Activated naive CD4-positive, alpha-beta T cell treated with anti-CD3 and anti-CD28 coated beads for 36 hours (primary cell): ENCODE measurements at regions of chr20 and their contacts with region 1.

Region 1: DNA sequence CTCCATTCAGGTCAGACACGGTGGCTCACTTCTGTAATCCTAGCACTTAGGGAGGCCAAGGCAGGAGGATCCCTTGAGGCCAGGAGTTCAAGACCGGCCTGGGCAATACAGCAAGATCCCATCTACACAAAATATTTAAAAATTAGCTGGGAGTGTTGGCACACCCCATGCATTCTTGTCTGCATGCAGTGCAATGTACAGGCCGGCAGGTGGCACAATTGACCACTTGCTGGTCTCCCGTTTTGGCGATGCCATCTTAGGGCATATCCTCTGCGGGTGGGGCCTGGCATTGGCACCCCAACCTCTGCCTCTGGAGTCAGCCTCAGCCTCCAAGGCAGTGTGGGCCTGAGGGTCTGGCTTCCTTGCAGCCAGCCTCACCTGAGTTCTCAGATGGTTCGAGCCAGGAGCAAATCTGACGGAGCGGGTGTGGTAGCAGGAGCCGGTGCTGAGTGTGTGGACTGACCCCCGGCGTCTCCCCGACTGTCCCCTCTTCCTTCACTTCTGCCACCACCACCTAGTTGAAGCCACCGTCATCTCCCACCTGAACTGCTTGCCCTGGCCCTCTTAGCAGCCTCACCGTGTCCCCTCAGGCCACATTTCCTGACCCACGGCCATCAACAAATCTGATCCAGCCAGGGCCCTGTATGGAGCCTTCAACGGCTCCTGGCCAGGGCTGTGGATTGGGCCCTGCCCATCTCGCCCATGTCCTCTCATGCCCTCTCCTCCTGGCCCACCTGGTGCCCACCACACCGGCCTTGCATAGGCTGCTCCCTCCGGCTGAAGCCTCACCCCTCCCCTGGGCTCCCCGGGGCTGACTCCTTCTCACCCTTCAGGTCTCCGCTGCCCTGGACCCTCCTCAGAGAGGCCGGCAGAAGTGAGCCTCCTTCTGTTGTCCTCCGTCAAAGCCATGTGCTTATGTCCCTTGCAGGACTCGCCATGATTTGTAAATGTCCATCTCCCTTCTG is 44.0 kb downstream of the EFCAB8 start:
- DNase-seq: peak; percentile 85
- H3K4me3 Mint-ChIP-seq: no peak overlapping the region
- H3K27ac Mint-ChIP-seq: peak overlapping the region; percentile 24
- H3K4me1 Mint-ChIP-seq: peaks cover 29% of the 10 kb centered on the region
- H3K27me3 Mint-ChIP-seq: no peaks in the 10 kb centered on the region

Region 2: DNA sequence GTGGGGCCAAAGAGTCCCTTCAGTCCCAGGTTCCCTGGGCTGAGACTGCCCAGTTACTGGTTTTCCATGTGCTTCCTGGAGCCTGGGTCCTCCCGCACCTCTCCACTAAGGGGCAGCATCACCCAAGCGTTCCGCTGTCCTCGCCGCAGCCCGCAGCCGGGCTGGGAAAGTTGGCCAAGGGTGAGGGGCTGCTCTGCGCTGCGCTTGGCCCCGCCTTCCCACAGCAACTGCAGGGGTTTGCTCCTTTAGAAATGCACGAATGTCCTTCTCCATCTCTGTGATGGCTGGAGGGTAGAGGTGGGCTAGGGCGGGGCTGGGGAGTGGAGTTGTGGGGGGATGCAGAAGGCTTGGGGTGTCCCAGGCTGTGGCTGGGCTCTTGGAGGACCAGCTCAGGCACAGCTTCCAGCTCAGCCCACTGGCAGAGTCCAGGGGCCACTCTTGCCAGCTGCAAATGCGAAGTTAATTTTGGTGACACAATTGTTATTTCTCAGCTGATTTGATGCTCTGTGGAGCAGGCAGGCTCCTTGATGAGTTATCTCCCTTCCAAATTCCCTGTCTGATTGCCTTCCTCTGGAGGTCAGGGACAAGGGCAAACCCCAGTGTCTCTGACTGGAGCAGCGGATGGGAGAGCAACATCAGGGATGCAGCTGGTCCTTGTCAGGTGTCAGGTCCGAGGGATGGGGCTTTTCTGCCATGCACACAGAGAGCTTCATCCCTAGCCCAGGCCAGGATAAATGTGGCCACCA is 380.8 kb before region 1 on chr20:
- CTCF ChIA-PET with region 1: no interaction called
- intact Hi-C with region 1: no loop called
- DNase-seq: peak; percentile 81
- H3K4me3 Mint-ChIP-seq: no peak overlapping the region
- H3K27ac Mint-ChIP-seq: peak overlapping the region; percentile 81
- H3K4me1 Mint-ChIP-seq: peaks cover 56% of the 10 kb centered on the region
- H3K27me3 Mint-ChIP-seq: no peaks in the 10 kb centered on the region

Region 3: GRCh38 chr20:32599783-32600340 is 302.9 kb before region 1 on chr20:
- CTCF ChIA-PET with region 1: no interaction called
- intact Hi-C with region 1: no loop called
- DNase-seq: no peak
- H3K4me3 Mint-ChIP-seq: no peak overlapping the region
- H3K27ac Mint-ChIP-seq: no peak overlapping the region
- H3K4me1 Mint-ChIP-seq: no peaks in the 10 kb centered on the region
- H3K27me3 Mint-ChIP-seq: no peaks in the 10 kb centered on the region

Region 4: DNA sequence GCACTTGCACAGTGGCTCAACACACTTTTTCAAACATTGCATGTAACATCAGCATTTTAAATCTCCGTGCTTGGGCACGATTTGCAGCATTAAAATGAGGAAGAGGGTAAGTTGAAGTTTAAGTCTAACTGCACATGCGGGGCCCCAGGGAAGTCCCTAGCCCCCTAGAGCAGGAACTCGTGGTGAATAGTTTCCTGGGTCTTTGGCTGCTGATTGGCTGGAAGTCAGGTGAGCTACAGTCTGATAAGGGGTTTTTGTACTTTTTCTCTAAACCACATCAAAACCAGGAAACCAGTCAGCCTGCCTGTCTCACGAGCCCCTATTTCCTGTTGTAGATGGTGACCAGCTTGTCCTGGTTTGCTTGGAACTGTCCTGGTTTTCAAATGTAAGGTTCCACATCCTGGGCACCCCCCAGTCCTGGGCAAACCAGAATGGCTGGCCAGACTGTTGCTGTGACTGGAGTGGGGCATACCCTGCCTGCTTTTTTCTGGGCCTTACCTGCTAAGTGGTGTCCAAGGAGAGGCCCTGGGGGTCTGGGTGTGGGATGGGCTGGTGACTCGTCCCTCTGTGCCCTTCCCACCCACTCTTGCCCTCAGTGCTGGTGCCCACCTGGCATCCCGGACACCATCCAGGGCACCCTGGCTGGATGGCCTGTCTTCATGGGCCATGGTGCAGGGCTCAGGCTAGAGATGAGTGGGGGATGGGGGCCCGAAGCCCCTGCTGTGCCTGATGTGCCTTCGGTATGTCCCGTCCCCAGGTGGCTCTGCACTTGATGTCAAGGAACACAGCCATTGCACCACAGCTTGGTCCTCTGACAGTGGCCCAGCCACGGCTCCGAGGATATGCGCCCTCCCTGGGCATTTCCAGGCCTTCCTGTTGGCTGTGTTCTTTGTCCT is 69.7 kb after region 1 on chr20:
- CTCF ChIA-PET with region 1: interaction called, 3 read pairs
- intact Hi-C with region 1: loop called (anchors 2 kb)
- DNase-seq: peak; percentile 94
- H3K4me3 Mint-ChIP-seq: no peak overlapping the region
- H3K27ac Mint-ChIP-seq: no peak overlapping the region
- H3K4me1 Mint-ChIP-seq: peaks cover 74% of the 10 kb centered on the region
- H3K27me3 Mint-ChIP-seq: no peaks in the 10 kb centered on the region

Region 5: GRCh38 chr20:33076662-33077372 is 174.1 kb after region 1 on chr20:
- CTCF ChIA-PET with region 1: interaction called, 4 read pairs
- intact Hi-C with region 1: loop called (anchors 1 kb)
- DNase-seq: peak; percentile 29
- H3K4me3 Mint-ChIP-seq: no peak overlapping the region
- H3K27ac Mint-ChIP-seq: no peak overlapping the region
- H3K4me1 Mint-ChIP-seq: no peaks in the 10 kb centered on the region
- H3K27me3 Mint-ChIP-seq: no peaks in the 10 kb centered on the region

Region 6: GRCh38 chr20:33211817-33212424 is 309.2 kb after region 1 on chr20:
- CTCF ChIA-PET with region 1: interaction called, 6 read pairs
- intact Hi-C with region 1: loop called (anchors 2 kb)
- DNase-seq: peak; percentile 59
- H3K4me3 Mint-ChIP-seq: no peak overlapping the region
- H3K27ac Mint-ChIP-seq: no peak overlapping the region
- H3K4me1 Mint-ChIP-seq: no peaks in the 10 kb centered on the region
- H3K27me3 Mint-ChIP-seq: peaks cover 27% of the 10 kb centered on the region

Region 7: GRCh38 chr20:33299111-33299603 is 396.4 kb after region 1 on chr20:
- CTCF ChIA-PET with region 1: no interaction called
- intact Hi-C with region 1: loop called (anchors 1 kb)
- DNase-seq: peak; percentile 76
- H3K4me3 Mint-ChIP-seq: no peak overlapping the region
- H3K27ac Mint-ChIP-seq: no peak overlapping the region
- H3K4me1 Mint-ChIP-seq: peaks cover 2% of the 10 kb centered on the region
- H3K27me3 Mint-ChIP-seq: peaks cover 1% of the 10 kb centered on the region